Activated T-helper 1 cell treated with anti-CD3 and anti-CD28 coated beads, Interleukin-12 subunit alpha, Interleukin-12 subunit beta, Interleukin-2, Interleukin-4 antibody, amounts not matched to agents 30 ng/mL and 10 ng/mL and 1 ng/mL, durations not matched to agents 14 hours and 24 hours and 36 hours (primary cell): ENCODE measurements at regions of chr12 and their contacts with region 1.

Region 1: GRCh38 chr12:64222009-64222765 is at the start of gene KICS2:
- DNase-seq: peak; percentile 88
- H3K4me3 Mint-ChIP-seq: peak within 1 kb of the TSS; percentile 100
- H3K27ac Mint-ChIP-seq: peak within 1 kb of the TSS; percentile 100
- H3K4me1 Mint-ChIP-seq: peaks cover 33% of the 10 kb centered on the region
- H3K27me3 Mint-ChIP-seq: peaks cover 14% of the 10 kb centered on the region
- total RNA-seq, gene KICS2: 12.7 and 14.9 TPM in 2 replicates

Region 2: DNA sequence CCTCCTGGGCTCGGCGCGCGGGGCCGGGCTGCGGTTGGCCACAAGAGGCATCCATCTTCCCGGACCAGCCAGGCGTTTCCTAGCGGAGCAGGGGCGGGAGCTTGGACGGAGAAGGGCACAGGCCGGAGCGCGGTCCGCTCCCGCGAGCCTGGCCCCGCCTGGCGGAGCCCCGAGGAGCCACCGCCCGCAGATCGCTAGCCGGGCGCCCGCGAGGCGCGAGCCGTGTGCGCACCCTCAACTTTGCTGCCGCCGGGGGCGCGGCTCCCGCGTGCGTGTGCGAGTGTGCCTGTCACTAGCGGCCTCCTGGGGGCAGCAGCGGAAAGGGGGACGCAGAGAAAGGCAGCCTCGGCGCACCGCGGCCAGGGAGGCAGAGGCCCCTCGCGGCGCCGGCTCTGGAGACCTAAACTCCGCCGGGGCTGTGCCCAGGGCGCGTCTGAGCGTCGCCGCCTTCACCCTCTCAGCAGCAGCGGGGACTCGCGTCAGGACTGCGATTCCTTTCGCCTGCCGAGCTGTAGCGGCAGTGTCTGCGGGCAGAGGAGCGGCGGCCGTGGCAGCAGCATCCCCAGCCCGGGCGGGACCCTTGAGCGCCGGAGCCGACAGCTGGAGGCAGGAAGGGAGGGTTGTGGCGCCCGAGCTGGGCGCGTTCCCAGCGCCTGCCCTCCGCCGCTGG is 378.3 kb before region 1 on chr12:
- intact Hi-C with region 1: loop called (anchors 1 kb)
- DNase-seq: peak; percentile 69
- H3K4me3 Mint-ChIP-seq: peak overlapping the region; percentile 55
- H3K27ac Mint-ChIP-seq: no peak overlapping the region
- H3K4me1 Mint-ChIP-seq: peaks cover 11% of the 10 kb centered on the region
- H3K27me3 Mint-ChIP-seq: peaks cover 44% of the 10 kb centered on the region

Region 3: DNA sequence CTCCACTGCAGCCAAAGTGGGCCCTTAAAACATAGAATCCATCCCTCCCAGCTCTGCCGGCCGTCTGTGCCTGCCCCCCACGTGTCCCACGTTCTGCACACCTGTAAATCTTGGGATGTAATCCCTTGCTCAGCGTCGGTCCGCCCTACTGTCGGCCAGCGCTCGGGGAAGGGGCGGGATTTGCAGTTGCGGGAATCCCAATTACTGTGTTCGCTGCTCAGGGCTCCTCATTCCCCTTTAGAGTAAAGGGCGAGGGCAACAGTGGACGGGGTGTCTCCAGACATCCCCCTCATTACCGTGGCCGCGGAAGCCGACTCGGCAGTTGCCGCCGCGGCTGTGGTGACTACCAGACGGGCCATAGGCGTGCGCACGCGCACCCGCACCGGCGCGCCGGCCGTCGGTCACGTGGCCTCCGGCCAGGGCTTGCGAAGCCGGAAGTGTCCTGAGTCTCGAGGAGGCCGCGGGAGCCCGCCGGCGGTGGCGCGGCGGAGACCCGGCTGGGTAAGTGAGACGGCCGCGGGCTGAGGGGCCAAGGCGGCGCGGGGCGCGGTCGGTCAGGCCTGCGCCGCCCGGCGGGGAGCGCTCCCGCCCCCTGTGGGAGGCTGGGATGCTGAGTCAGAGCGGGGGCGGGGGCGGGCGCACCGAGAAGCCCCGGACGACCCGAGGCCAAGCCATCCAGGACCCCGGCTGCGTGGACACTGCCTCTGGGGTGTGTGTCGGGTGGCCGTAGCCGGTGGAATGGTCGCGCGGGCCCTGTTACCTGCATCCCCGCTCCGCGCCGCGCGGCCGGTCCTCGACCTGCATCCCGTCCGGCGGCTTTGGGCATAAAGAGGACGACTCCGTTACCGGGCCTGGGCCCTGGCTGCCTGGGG is 229.7 kb after region 1 on chr12 and contains the start of gene TBK1:
- intact Hi-C with region 1: loop called (anchors 1 kb)
- DNase-seq: peak; percentile 74
- H3K4me3 Mint-ChIP-seq: peak within 1 kb of the TSS; percentile 97
- H3K27ac Mint-ChIP-seq: peak within 1 kb of the TSS; percentile 94
- H3K4me1 Mint-ChIP-seq: peaks cover 47% of the 10 kb centered on the region
- H3K27me3 Mint-ChIP-seq: no peaks in the 10 kb centered on the region
- total RNA-seq, gene TBK1: 33.6 and 42.4 TPM in 2 replicates